Heart left ventricle (tissue), 16 donors: ENCODE measurements at regions of chr12 and their contacts with region 1.

Region 1: DNA sequence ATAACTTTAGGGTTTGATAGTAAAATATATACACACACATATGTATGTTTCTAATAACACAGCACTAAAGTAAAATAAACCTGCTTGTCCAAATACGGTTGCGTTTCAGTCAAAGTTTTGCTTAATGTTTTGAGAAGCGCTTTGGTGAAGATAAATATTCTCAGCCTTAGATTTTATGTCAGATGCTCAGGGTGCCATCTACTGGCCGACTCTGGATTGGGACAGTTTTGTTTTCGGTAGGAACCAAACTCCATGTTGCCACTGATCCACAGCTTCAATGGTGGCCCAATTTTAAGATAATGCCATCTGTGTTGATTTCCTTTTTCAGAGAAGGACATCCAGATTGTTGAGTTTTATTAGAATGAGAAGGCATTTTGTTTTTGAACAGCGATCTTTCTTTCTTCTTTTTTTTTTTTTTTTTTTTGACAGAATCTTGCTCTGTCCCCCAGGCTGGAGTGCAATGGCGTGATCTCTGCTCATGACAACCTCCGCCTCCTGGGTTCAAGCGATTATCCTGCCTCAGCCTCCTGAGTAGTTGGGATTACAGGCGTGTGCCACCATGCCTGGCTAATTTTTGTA is 43.1 kb downstream of the LLPH start:
- DNase-seq: peak; percentile 38 to 64 (median 45)
- ATAC-seq: peak in 3 of 4 donors; percentile 45 to 69 (median 62)
- H3K4me3 ChIP-seq: no peak overlapping the region
- H3K27ac ChIP-seq: no peak overlapping the region
- H3K4me1 ChIP-seq: peaks cover 0 to 2% (median 0%) of the 10 kb centered on the region in 12 donors
- H3K27me3 ChIP-seq: peaks cover 0 to 4% (median 0%) of the 10 kb centered on the region in 9 donors
- CTCF ChIP-seq: peak; percentile 56 to 85 (median 77)
- POLR2A ChIP-seq: no peak

Region 2: DNA sequence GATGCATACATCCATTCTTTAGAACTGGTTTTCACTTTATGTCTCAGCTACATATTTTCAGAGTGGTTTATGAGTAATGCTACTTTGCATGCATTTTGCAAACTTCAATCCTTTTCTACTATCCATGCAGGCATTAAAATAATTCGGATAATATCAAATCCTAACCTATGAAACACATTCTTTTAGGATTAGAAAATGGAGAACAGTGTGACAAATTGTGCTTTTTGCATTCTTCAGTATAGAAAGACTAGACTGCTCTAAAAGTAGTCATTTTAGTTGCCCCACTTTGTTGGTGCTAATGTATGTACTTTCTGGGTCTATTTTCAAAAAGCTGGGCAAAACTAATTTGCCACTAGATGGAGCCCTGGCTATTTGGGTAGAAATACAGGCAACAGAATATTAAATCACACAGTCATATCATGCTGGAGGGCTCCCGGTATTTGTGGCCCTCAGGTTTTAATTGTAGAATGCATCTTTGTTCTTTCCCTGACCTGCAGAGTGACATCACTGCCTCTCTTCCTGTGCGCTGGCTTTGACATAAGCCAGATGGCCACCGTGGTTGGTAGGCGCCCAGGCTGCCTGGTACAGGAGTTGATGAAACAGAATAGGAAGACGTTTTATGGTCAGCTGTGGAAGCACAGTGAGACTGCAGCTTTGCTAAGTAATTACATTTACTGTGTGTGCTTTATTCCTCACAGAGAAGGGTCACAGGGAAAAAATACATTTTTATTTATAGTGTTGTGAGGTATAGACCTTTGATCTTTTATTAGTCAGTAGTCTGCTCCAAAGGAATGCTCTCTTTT is 780.9 kb before region 1 on chr12:
- intact Hi-C with region 1: loop called in 2 of 10 experiments (anchors 5 to 10 kb)
- DNase-seq: peak; percentile 63 to 80 (median 75)
- ATAC-seq: peak; percentile 86 to 95 (median 94)
- H3K4me3 ChIP-seq: no peak overlapping the region
- H3K27ac ChIP-seq: peak overlapping the region in 9 of 12 donors; percentile 3 to 61 (median 22)
- H3K4me1 ChIP-seq: peaks cover 0 to 62% (median 43%) of the 10 kb centered on the region in 12 donors
- H3K27me3 ChIP-seq: no peaks in the 10 kb centered on the region
- CTCF ChIP-seq: peak; percentile 26 to 59 (median 46)
- POLR2A ChIP-seq: no peak

Region 3: DNA sequence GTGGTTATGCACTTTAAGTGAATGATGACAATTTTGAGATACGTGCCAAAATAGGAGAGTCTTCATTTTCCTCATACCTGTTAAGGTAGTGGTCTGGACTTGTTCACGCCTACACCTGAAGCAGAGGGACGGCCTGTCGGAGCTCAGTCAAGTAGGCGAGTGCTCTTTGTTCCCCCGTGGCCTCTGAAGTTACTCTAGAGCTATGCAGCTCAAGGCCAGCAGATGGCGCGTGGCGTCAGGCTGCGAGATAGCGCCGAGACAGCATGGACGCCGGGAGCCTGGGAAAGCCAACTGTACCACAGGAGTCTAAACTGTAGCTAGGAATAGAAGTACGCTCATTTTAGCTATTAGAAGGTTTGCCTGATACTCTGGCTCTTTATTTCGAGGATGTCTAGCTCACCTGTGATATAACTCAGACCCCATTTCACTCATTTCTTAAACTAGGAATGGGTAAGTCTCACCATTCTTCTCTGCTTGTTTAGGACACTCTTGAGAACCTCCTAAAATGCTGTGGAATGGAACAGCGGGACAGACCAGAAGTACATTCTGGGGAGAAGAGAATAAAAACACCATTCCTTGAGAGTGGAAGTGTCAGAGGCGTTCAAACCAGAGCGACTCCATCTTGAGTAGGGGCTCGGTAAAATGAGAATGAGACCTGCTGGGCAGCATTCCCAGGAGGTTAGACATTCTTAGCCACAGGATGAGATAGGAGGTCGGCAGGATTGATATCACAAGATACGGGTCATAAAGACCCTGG is 530.6 kb before region 1 on chr12:
- intact Hi-C with region 1: loop called (anchors 1 to 10 kb)
- DNase-seq: peak; percentile 69 to 88 (median 80)
- ATAC-seq: peak; percentile 89 to 99 (median 98)
- H3K4me3 ChIP-seq: no peak overlapping the region
- H3K27ac ChIP-seq: no peak overlapping the region
- H3K4me1 ChIP-seq: peaks cover 0 to 9% (median 0%) of the 10 kb centered on the region in 12 donors
- H3K27me3 ChIP-seq: peaks cover 0 to 9% (median 0%) of the 10 kb centered on the region in 9 donors
- CTCF ChIP-seq: peak; percentile 83 to 95 (median 92)
- POLR2A ChIP-seq: no peak

Region 4: GRCh38 chr12:65602610-65603295 is 484.7 kb before region 1 on chr12:
- intact Hi-C with region 1: loop called in 5 of 10 experiments (anchors 2 to 10 kb)
- DNase-seq: peak; percentile 73 to 86 (median 80)
- ATAC-seq: peak; percentile 88 to 98 (median 96)
- H3K4me3 ChIP-seq: peak overlapping the region in 9 of 12 donors; percentile 18 to 51 (median 34)
- H3K27ac ChIP-seq: peak overlapping the region in 10 of 12 donors; percentile 6 to 65 (median 49)
- H3K4me1 ChIP-seq: peaks cover 0 to 25% (median 16%) of the 10 kb centered on the region in 12 donors
- H3K27me3 ChIP-seq: peaks cover 0 to 14% (median 3%) of the 10 kb centered on the region in 9 donors
- CTCF ChIP-seq: peak; percentile 60 to 85 (median 72)
- POLR2A ChIP-seq: no peak

Region 5: DNA sequence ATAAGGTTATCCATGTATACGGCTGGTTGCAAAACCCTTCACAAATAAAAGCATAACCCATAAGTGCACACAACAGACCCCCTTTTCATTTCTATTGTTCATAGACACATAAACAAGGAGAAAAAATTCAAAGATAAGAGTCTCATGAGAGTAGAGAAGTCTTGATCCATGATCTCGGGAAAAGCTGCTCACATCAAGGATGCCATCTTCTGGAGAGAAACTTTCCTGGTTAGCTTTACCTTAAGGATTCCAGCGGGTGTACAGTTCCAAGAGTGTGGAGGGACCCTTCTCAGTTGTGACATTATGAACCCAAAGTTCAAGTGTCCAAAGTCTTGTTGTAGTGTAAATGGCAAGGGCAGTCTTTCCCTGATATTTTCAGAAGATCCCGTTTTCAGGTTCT is 101.4 kb before region 1 on chr12:
- intact Hi-C with region 1: loop called in 3 of 10 experiments (anchors 10 kb)
- DNase-seq: no peak
- ATAC-seq: no peak
- H3K4me3 ChIP-seq: no peak overlapping the region
- H3K27ac ChIP-seq: no peak overlapping the region
- H3K4me1 ChIP-seq: no peaks in the 10 kb centered on the region
- H3K27me3 ChIP-seq: peaks cover 0 to 3% (median 0%) of the 10 kb centered on the region in 9 donors
- CTCF ChIP-seq: peak in 1 of 12 donors; percentile 8
- POLR2A ChIP-seq: no peak